Naive thymus-derived CD8-positive, alpha-beta T cell (primary cell): ENCODE measurements at regions of chr15 and their contacts with region 1.

Region 1: DNA sequence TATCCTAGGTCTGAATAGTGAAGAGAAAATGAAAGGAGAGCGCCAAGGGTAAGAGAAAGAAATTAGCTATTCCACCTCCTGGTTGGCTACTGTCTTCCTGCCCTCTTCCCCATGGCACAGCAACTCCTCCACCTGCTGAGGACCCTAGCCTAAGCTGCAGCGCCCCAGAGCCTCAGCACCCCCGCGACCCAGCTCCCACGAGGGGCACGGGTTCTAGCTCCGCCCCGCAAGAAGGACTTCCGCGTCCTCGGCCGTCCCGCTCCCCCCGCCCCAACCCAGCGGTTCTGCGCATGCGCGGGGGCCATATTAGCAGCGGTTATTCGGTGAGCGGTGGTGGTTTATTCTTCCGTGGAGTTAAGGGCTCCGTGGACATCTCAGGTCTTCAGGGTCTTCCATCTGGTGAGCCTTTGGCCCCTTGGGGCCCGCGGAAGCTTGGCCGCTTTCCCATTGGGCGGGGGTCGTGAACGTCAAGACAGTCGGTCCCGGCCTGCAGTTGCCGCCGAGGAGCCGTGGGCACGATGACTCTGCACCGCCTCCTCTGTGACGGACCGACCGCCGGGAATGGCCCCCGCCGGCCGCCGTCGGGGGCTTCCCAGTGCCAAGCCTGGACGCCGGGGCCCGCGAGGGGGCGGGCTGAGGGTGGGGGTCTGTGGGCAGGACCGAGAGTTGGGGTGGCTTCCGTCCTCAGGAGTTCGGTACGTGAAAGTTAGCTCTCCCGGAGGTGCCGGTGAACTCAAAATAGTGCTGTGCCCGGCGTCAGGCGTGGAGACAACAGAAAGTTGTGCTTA is at the start of gene PSMA4:
- DNase-seq: peak; percentile 85 to 99 (median 94)
- ATAC-seq: peak; percentile 87
- H3K4me3 Mint-ChIP-seq: peak within 1 kb of the TSS; percentile 87 to 99 (median 96)
- H3K27ac Mint-ChIP-seq: peak within 1 kb of the TSS; percentile 98 to 100 (median 99)
- H3K4me1 Mint-ChIP-seq: peaks cover 12 to 33% (median 28%) of the 10 kb centered on the region in 4 donors
- H3K27me3 Mint-ChIP-seq: no peaks in the 10 kb centered on the region
- polyA plus RNA-seq, gene PSMA4: 170 to 218 (median 190) TPM

Region 2: DNA sequence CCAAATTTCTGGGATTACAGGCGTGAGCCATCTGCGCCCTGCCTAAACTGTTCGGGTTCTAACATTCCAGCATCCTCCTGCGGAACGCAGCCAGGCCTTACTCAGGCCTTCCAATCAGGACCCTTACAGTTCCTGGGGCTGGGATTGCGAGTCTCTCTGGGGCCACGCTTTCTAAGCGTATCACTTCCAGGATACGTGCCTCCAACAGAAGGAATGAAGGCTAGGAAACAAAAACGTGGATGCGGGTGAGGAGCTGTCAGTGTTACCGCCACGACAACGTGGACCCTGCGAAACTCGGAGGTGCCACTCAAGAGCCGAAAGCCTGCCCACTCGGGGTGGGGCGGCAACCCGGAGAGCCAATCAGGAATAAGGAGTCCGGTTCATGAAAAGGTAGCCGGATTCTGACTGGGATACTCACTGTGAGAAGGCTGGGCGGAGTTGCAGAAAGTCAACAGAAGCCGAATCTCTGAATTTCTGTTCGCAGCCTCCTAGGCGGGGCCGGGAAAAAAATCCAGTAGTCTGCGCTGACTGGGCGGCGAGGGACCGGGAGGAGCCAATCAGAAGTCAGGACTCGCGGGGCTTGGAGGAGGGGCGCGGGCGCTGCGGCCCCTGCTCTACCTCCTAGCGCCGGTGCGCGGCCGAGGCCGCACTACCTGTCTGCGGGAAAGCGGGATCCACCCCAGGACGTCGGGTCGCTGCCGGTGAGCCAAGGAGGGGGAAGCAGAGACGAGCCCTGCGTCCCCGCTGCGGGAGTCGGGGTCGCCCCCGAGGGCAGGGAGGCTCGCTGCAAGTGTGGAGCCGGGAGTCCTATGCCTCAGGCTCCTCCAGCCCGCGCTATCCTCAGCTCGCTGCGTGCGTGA is 33.1 kb before region 1 on chr15 and contains the start of gene HYKK:
- POLR2A ChIA-PET with region 1: interaction called, 11 read pairs
- DNase-seq: peak; percentile 38 to 80 (median 68)
- ATAC-seq: peak; percentile 85 to 91
- H3K4me3 Mint-ChIP-seq: peak within 1 kb of the TSS; percentile 86 to 98 (median 94)
- H3K27ac Mint-ChIP-seq: peak within 1 kb of the TSS; percentile 59 to 90 (median 78)
- H3K4me1 Mint-ChIP-seq: peaks cover 10 to 29% (median 24%) of the 10 kb centered on the region in 4 donors
- H3K27me3 Mint-ChIP-seq: peaks cover 0 to 7% (median 0%) of the 10 kb centered on the region in 5 donors
- polyA plus RNA-seq, gene HYKK: 3.0 to 5.9 (median 4.1) TPM

Region 3: DNA sequence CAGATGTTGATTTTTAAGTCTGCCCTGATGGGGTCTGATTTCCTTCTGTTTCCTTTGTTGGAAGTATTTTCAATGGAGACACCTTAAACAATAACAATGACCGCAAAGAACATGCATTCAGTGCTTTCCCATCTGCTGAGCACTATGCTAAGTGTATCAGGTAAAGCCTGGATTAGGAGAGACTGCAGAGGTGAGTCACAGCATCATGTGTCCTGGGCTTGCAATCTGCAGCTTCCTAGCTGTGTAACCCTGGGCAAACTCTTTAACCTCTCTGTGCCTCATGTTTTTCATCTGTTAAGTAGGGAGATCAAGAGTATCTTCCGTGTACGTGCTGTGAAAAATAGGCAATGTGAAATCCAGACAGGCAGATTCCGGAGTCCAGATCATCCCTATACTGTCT is 113.9 kb after region 1 on chr15:
- POLR2A ChIA-PET with region 1: no interaction called
- DNase-seq: no peak
- ATAC-seq: no peak
- H3K4me3 Mint-ChIP-seq: no peak overlapping the region
- H3K27ac Mint-ChIP-seq: peak overlapping the region in 1 of 10 donors; percentile 23
- H3K4me1 Mint-ChIP-seq: peaks cover 0 to 1% (median 0%) of the 10 kb centered on the region in 4 donors
- H3K27me3 Mint-ChIP-seq: no peaks in the 10 kb centered on the region